Motor neuron (in vitro differentiated cells): ENCODE measurements at regions of chr10 and their contacts with region 1.

Region 1: DNA sequence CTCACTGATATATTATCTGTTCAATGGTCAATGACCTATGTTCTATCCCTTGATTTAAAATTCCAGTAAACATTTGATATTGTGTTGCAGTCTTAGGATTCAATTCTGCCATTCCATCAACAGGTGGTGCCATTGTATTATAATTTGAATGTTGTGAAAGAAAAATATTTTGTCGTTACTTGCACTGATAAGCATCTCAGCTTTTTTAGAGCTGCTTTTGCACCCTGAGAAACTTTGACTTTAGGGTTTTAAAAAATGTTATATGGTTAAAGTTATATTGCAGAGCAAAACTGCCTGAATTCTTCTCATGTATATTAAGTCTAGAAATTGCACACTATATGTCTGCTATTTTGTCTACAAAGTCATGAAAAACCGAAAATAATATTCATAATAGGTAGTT is 18.8 kb upstream of the MINDY3 start:
- ATAC-seq: no peak
- H3K4me3 ChIP-seq: no peak overlapping the region
- H3K27ac ChIP-seq: no peak overlapping the region
- H3K4me1 ChIP-seq: peaks cover 6 to 7% of the 10 kb centered on the region in 2 donors

Region 2: GRCh38 chr10:16545116-16545736 is 666.2 kb after region 1 on chr10:
- in situ Hi-C with region 1: loop called in 2 of 9 experiments (anchors 25 kb)
- ATAC-seq: peak in 4 of 8 experiments; percentile 35 to 66 (median 52)
- H3K4me3 ChIP-seq: no peak overlapping the region
- H3K27ac ChIP-seq: no peak overlapping the region
- H3K4me1 ChIP-seq: no peaks in the 10 kb centered on the region

Region 3: GRCh38 chr10:16597656-16598055 is 718.6 kb after region 1 on chr10:
- in situ Hi-C with region 1: no loop called
- ATAC-seq: peak in 3 of 8 experiments; percentile 50 to 75 (median 58)
- H3K4me3 ChIP-seq: no peak overlapping the region
- H3K27ac ChIP-seq: no peak overlapping the region
- H3K4me1 ChIP-seq: peaks cover 13 to 18% of the 10 kb centered on the region in 2 donors

Region 4: DNA sequence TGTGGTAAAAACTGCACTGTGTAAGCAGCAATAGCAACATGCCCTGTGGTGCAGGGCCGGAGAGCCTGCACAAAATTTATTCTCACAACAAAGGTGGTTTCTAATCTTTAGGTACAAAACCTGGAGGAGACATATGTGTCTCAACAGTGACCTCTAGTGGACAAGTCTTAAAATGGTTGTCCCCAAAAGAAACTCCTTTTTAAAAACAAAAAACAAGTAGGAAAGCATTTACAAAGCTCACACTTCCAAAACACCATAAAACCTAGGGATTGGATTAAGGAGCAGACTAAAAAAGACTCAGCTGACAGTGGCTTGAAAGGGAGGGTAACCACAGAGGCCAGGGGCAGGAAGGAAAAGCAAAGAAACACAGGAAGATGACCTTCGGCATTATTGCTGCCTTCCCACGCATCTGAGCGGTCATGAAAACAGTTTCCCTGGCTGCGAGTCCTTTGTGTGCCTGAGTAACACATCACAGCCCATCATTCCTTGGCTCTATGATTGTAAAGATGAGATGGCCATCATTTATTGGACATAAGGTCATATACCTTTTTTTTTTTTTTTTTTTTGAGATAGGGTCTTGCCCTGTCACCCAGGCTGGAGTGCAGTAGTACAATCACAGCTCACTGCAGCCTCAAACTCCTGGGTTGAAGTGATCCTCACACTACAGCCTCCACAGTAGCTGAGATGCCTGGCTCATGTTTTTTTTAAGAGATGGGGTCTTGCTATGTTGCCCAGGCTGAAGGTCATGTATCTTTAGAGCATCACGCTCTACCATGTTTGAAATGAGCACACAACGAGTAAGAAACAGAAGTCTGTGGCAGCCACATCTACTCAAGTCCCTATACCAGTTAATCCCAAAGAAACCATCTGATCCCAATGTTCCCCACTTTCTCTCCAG is 898.7 kb after region 1 on chr10:
- in situ Hi-C with region 1: loop called in 6 of 9 experiments (anchors 25 kb)
- ATAC-seq: peak in 2 of 8 experiments; percentile 26 to 34
- H3K4me3 ChIP-seq: no peak overlapping the region
- H3K27ac ChIP-seq: no peak overlapping the region
- H3K4me1 ChIP-seq: peaks cover 0 to 12% of the 10 kb centered on the region in 2 donors

Region 5: DNA sequence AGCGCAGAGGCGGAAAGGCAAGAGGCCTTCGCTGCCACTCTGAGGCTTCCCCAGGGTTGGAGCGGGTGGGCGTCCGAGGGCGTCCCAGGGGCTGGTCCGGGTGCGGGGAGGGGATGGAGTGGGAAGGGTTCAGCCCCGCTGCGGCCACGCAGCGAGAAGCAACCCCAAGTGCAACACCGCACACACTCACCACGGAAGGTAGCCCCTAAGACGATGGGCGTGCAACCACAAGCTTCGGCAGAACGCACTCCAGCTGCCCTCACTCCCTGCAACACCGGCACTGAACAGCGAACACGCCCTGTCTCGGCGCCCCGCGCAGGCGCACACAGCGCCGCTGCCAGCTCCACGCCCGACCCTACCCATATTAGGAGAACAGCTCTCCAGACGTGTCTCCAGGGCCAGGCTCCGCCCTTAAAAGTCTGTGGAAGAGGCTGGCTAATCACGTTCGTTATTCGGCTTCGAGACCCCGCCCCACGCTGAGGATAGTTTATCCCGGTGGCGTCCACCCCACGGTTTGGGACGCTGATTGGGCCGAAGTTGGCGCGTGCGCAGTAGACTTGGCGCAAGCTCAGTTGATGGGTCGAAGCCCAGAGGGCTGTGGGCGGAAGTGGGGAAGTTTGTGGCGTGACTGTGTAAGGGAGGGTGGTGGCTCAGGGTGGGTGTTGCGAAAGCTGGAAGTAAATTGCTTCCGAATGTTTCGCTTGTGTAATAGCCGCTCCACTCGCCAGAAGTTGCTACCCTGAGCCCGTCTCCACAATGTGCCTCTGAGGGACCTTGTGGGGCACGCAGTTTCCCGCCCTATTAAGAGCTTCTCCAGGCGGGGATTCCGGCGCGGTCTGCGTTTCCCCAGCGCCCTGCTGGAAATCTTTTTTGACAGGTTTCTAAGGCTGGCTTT is 938.3 kb after region 1 on chr10 and contains the start of gene RSU1:
- in situ Hi-C with region 1: loop called in 1 of 9 experiments (anchors 25 kb)
- ATAC-seq: peak; percentile 90 to 95 (median 94)
- H3K4me3 ChIP-seq: peak within 1 kb of the TSS; percentile 47 to 65 (median 59)
- H3K27ac ChIP-seq: peak within 1 kb of the TSS; percentile 74 to 80
- H3K4me1 ChIP-seq: peaks cover 2 to 12% of the 10 kb centered on the region in 2 donors
- total RNA-seq, gene RSU1: 20.9 to 55.9 (median 35.0) TPM